Gastrocnemius medialis (tissue), 4 donors: ENCODE measurements at regions of chr6 and their contacts with region 1.

Region 1: DNA sequence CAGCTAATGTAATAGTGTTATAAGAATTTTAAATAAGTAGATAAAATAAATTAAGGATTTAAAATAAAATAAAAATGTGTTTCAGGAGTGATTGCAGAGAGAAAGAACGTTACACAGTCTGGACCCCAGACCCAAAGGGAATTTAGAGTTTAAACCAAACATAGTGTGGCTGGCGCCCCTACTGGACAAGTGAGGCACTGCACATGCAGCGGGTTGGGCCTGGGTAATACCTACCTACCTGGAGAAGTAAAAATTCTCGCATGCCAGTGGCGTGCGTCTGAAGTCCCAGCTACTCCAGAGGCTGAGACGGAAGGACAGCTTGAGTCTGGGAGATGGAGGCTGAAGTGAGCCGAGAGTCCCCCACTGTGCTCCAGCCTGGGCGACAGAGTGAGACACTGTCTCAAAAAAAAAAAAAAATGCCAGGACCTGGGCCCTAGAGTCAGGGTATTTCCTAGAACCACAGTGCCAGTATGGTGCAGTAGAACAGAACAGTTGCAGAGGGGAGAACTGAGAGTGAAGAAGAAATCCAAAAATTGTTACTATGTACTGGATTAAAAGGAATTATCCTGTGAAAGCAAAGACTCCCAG is 71.4 kb upstream of the TCF21 start:
- DNase-seq: no peak
- ATAC-seq: no peak
- H3K4me3 ChIP-seq: no peak overlapping the region
- H3K27ac ChIP-seq: no peak overlapping the region
- H3K4me1 ChIP-seq: peaks cover 0 to 3% of the 10 kb centered on the region in 2 donors
- H3K27me3 ChIP-seq: no peaks in the 10 kb centered on the region
- CTCF ChIP-seq: peak in 1 of 5 experiments; percentile 35
- POLR2A ChIP-seq: no peak

Region 2: DNA sequence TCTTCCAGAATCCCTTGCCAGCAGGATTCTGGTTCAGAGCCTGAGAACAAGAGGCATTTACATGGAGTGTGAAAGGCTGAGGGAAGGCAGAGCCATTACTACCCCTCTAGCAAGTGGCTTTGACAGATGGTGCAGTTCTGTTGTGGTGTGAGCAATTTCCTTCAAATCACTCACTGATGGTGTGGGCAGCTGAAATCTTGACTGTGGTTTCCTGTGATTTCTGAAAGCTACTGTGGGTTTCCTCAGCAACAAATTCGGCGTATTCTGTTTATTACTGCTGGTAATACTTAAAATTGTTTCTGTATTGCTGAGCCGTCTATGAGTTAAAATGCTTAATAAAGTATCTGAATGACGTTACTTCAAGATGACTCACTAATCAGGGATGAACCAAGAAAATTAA is 110.1 kb before region 1 on chr6:
- in situ Hi-C with region 1: loop called in 1 of 4 experiments (anchors 25 kb)
- intact Hi-C with region 1: no loop called
- DNase-seq: no peak
- ATAC-seq: no peak
- H3K4me3 ChIP-seq: no peak overlapping the region
- H3K27ac ChIP-seq: no peak overlapping the region
- H3K4me1 ChIP-seq: peaks cover 0 to 7% of the 10 kb centered on the region in 2 donors
- H3K27me3 ChIP-seq: no peaks in the 10 kb centered on the region
- CTCF ChIP-seq: no peak
- POLR2A ChIP-seq: no peak

Region 3: DNA sequence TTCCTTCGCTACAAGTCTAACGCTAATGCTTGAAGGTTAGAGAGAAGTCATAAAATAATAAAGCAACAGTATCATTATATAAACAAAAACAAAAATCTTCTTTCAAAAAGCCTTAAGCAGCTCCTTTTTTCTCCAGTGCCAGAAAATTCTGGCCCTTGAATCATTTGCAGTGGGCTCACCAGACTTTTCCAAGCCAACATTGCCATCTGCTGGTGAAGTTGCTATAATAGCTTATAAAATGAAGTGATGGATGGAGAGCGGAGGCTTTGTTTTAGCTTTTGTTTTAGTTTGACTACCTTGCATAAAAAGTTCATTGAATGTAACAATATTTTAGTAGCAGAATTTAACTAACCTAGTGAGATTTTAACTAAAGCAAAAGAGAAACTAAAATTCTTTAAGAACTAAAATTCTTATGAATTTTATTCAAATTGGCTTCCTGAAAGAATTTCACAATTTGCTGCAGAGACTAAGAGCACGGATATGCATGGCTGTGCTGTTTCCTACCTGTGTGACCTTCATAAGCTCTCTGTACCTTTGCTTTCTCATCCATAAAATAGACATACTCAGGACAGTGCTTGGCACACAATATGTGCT is 279.7 kb after region 1 on chr6:
- in situ Hi-C with region 1: no loop called
- intact Hi-C with region 1: no loop called
- DNase-seq: peak in 1 of 2 donors; percentile 34
- ATAC-seq: peak in 1 of 2 donors; percentile 81
- H3K4me3 ChIP-seq: no peak overlapping the region
- H3K27ac ChIP-seq: no peak overlapping the region
- H3K4me1 ChIP-seq: no peaks in the 10 kb centered on the region
- H3K27me3 ChIP-seq: no peaks in the 10 kb centered on the region
- CTCF ChIP-seq: peak; percentile 50 to 67 (median 65)
- POLR2A ChIP-seq: no peak